ENCODE measurements at regions of chr5 and their contacts with region 1.

Region 1: DNA sequence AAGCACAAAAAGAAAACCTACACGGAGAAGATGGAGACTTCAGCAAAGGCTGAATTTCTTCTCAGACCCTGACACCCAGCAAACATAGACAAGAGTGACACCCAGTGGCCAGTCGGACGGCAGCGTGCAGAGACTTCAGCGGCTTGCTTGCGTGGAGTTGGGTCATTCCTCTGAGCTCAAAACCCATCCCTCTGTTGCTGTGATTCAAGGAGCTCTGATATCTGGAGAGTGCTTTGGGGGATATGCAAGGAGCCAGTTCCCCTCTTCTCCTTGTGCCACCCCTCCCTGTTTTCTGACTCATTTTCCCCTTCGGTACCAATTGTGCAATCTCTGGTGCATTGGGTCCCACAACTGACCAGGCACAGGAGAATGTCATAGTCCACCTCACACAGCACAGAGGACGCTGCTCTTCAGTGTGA is 27.5 kb downstream of the SH3TC2 start:
- DNase-seq: peak; percentile 64
- H3K4me3 ChIP-seq: no peak overlapping the region
- H3K27ac ChIP-seq: no peak overlapping the region
- H3K27me3 ChIP-seq: no peaks in the 10 kb centered on the region
- CTCF ChIP-seq: peak; percentile 95

Region 2: GRCh38 chr5:148791334-148791667 is 244.1 kb before region 1 on chr5:
- CTCF ChIA-PET with region 1: interaction called, 19 read pairs
- POLR2A ChIA-PET with region 1: no interaction called
- DNase-seq: no peak
- H3K4me3 ChIP-seq: no peak overlapping the region
- H3K27ac ChIP-seq: no peak overlapping the region
- H3K27me3 ChIP-seq: no peaks in the 10 kb centered on the region
- CTCF ChIP-seq: no peak

Region 3: DNA sequence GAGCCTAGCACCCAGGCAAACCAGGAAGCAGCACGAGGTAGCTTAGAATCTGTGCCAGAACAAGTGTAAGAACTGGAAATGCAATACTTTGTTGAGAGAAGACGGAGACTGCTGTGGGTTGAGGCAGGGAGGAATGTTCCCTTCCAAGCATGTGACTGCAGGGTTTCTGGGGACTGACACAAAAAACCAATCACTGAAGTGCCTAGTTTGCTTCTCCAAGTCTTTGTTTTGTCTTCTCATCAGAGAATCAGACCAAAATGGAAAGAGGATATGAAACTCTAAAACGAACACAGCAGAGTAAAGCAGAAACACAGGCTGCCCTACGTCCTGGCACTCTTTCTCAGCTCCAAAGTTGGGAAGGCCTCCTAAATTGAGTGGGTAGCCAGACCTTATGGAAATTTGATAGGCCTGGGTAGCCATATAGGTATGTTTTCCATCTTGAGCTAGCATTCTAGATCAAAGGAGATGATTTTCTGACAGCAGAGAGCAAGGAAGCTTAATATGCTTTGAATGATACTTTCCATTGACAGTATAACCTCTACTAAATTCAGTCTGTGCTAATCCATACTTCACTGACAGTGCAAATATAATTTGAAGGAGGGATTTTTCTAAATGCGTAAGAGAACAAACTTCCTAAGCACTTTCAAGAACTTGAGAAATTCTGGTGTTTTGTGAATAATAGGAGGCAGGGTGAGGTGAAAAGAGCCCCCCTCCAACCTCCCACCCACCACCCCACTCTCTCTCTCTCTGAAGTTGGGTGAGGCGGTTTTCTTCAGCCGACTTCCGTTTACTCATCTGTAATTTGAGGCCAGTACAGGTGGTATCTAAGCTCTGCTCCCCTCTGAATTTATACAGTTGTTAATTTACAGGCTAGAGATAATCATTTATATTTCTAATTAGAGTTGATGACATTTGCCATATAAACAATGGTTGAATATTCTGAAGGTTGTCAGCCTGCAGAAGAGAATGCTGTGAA is 203.5 kb before region 1 on chr5:
- CTCF ChIA-PET with region 1: interaction called, 30 read pairs
- POLR2A ChIA-PET with region 1: no interaction called
- DNase-seq: no peak
- H3K4me3 ChIP-seq: no peak overlapping the region
- H3K27ac ChIP-seq: no peak overlapping the region
- H3K27me3 ChIP-seq: no peaks in the 10 kb centered on the region
- CTCF ChIP-seq: no peak

Region 4: DNA sequence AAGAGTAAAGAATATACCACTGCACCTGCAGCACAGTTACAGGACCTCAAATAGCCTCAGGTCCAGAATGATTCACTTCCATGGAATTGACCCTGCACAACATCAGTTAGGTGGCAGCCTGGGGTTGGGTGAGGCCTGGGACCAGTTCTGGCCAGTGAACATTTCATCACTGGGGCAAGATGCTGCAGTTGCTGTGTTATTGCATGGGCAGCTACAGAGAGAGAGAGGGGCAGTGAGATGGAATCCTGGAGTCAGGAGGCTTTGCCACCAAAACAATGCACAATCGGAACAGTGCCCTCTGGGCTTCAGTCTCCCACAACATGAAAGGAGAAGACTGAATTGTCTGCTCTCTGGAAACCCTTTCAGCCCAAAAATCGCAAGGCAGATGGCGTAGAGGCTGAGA is 24.3 kb before region 1 on chr5:
- CTCF ChIA-PET with region 1: interaction called, 53 read pairs
- POLR2A ChIA-PET with region 1: no interaction called
- DNase-seq: no peak
- H3K4me3 ChIP-seq: no peak overlapping the region
- H3K27ac ChIP-seq: no peak overlapping the region
- H3K27me3 ChIP-seq: no peaks in the 10 kb centered on the region
- CTCF ChIP-seq: no peak

Region 5: GRCh38 chr5:149046196-149046829 is 10.9 kb after region 1 on chr5:
- CTCF ChIA-PET with region 1: interaction called, 35 read pairs
- POLR2A ChIA-PET with region 1: no interaction called
- DNase-seq: no peak
- H3K4me3 ChIP-seq: no peak overlapping the region
- H3K27ac ChIP-seq: no peak overlapping the region
- H3K27me3 ChIP-seq: no peaks in the 10 kb centered on the region
- CTCF ChIP-seq: no peak

Region 6: DNA sequence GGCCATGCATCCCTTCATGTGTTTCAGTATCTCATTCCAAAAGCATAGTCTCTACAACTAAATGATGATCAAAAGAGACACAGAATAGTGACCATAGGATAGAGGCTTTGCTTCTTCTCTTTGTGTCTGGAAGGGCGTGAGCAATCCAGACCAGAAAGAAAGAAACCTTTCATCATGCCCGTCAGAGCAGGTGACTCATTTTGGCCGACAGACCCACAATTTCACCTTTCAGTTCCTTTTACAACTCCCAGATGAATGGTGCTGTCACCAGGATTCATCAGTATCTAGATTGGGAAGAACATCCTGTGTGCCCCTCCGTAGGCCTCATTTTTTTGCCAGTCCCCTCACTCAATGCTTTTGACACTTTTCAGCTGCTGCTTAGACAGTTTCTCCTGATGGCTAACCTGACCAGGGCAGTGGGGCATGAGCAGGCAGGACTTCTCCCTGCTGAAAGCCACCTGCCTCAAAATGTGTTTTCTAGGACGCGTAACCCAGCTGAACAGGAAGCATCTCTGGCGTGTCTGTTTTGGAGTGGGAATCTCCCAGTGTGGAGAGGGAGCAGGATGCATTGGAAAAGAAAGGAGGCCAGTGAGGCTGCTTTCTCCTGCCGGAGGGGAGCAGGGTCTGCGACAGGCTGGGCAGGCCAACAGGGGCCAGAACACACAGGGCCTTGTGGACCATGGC is 127.2 kb after region 1 on chr5:
- CTCF ChIA-PET with region 1: no interaction called
- POLR2A ChIA-PET with region 1: no interaction called
- DNase-seq: no peak
- H3K4me3 ChIP-seq: no peak overlapping the region
- H3K27ac ChIP-seq: no peak overlapping the region
- H3K27me3 ChIP-seq: no peaks in the 10 kb centered on the region
- CTCF ChIP-seq: no peak

Region 7: DNA sequence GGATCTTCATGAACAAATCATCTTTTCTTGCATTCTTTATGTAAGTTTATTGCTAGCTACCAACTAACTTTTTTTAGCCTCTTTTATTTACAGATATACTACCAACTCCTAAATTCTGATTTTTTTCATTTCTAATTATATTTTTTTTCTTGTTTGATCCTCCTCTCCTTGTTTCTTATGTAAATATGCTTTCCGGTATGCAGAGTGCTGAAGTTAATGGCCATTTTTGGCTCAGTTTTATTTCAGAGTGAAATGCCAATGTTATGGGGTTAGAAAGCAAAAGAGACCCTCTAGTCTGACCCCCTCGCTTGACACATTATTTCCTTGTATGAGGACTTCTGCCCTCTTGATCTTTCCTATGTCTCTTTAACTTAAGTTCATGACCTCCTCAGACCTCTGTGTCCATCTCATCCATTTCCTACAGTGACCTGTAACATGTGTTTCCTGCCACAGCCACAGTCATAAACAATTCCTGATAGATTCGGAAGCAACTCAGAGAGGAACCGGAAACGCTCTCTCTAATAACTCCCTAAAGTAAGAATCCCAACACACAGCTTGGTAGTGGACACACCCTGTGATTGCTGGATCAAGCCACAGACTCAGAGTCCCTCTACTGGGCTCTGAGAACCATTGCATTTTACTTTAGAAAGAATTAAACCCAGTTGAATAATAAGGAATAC is 193.4 kb after region 1 on chr5:
- CTCF ChIA-PET with region 1: interaction called, 14 read pairs
- POLR2A ChIA-PET with region 1: no interaction called
- DNase-seq: peak; percentile 82
- H3K4me3 ChIP-seq: no peak overlapping the region
- H3K27ac ChIP-seq: no peak overlapping the region
- H3K27me3 ChIP-seq: no peaks in the 10 kb centered on the region
- CTCF ChIP-seq: peak; percentile 90

Measured in AG04450 (cell line).